Activated CD4-positive, alpha-beta T cell treated with anti-CD3 and anti-CD28 coated beads, Interleukin-2, amount 10 ng/mL, durations not matched to agents 24 days and 14 days (primary cell): ENCODE measurements at regions of chr18 and their contacts with region 1.

Region 1: DNA sequence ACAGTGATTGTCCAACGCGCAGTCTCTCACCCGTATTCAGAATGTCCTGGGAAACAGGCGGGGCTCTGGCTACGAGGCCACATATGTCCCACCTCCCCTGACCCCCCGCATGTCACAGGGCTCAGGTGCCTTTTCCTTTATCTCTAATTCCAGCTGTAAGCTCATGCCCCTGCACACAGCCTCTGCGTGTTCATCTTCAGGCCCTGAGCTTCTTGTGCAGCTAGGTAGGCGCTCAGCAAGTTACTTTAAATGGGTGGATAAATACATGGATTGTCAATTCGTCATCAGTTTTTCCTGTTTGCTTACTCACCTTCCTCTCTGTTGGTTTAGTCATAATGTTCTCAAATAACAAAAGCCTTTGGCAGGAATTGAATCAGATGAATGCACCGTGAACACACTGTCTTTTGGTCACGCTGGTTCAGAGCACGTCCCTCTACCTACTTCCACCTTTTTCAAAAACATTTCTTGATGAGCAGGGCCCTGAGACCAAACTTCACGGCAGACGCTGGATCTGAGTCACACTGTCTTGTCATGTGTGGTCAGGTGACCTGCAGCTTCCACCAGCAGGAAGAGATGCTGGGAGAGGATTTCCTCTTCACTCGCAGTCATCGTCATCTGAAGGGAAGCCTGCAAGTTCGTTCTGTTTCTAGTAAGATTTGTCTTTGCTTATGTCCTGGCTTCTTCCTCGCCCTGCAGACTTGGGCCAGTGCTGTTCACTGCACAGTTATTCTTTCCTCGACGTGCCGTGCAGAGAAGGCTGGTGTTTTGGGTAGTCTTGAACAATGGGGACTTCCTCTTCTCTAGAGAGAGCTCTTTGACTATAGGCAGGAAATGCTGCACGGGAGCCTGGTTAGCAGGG is 138.1 kb downstream of the PTGR3 start:
- DNase-seq: peak; percentile 91
- H3K4me3 Mint-ChIP-seq: peak overlapping the region; percentile 79
- H3K27ac Mint-ChIP-seq: peak overlapping the region; percentile 92
- H3K4me1 Mint-ChIP-seq: peaks cover 29% of the 10 kb centered on the region
- H3K27me3 Mint-ChIP-seq: no peaks in the 10 kb centered on the region

Region 2: DNA sequence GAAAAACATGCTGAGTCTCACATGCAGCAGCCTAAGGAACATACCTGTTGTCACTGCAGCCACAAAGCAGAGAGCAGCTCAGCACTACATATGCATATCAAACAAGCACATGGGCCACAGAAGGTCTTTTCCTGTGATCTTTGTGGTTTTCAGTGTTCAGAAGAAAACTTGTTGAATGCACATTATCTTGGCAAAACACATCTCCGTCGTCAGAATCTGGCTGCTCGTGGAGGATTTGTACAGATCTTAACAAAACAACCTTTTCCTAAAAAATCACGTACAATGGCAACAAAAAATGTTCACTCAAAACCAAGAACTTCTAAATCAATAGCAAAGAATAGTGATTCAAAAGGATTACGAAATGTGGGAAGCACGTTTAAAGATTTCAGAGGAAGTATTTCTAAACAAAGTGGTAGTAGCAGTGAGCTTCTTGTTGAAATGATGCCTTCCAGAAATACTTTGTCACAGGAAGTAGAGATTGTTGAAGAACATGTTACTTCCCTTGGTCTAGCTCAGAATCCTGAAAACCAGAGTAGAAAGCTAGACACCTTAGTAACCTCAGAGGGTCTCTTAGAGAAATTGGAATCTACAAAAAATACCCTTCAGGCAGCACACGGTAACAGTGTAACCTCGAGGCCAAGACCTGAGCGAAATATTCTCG is 439.1 kb before region 1 on chr18:
- intact Hi-C with region 1: loop called (anchors 10 kb)
- DNase-seq: peak; percentile 81
- H3K4me3 Mint-ChIP-seq: peak overlapping the region; percentile 83
- H3K27ac Mint-ChIP-seq: peak overlapping the region; percentile 94
- H3K4me1 Mint-ChIP-seq: peaks cover 38% of the 10 kb centered on the region
- H3K27me3 Mint-ChIP-seq: no peaks in the 10 kb centered on the region

Region 3: DNA sequence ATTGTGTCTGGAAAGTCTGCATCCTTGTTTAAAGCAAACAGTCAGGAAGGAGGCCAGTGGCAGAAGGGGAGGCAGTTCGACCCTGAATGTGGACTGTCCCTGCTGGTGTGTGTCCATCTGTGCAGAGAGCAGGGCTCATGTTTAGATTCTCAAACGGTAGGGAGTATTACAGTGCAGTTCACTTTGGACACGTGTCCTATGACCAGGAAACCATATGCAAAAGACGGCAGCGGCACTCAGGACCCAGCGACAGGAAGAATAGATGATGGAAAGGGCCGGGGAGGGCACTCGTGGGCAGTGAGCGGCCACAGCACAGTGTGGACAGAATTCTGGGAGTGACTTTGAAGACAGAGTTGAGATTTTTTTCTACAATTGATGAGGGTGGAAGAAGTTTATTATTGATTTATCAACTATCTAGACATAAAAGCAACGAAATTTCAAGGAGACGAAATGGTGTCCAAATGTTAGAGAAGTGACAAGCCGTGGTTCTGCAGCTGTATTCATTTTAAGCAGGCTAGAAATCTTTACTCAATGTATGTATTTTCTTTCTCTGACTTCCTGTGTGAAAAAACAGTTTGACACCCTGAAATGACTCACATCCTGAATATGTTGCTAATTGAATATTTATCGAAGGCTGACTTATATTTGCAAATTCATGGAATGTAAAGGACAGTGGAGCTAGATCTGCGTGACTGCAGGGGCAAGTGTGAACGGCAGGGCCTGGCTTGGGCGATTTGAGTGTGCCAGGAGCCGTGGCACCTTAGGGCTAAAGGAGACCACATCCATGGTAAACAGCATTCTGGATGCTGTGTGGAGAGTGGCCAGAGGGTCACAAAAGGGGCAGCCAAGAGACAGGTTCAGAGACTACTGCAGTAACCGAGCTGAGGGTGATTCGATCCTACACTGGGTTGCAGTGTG is 76.1 kb before region 1 on chr18:
- intact Hi-C with region 1: loop called (anchors 2 kb)
- DNase-seq: peak; percentile 67
- H3K4me3 Mint-ChIP-seq: peak overlapping the region; percentile 72
- H3K27ac Mint-ChIP-seq: peak overlapping the region; percentile 76
- H3K4me1 Mint-ChIP-seq: peaks cover 44% of the 10 kb centered on the region
- H3K27me3 Mint-ChIP-seq: no peaks in the 10 kb centered on the region

Region 4: DNA sequence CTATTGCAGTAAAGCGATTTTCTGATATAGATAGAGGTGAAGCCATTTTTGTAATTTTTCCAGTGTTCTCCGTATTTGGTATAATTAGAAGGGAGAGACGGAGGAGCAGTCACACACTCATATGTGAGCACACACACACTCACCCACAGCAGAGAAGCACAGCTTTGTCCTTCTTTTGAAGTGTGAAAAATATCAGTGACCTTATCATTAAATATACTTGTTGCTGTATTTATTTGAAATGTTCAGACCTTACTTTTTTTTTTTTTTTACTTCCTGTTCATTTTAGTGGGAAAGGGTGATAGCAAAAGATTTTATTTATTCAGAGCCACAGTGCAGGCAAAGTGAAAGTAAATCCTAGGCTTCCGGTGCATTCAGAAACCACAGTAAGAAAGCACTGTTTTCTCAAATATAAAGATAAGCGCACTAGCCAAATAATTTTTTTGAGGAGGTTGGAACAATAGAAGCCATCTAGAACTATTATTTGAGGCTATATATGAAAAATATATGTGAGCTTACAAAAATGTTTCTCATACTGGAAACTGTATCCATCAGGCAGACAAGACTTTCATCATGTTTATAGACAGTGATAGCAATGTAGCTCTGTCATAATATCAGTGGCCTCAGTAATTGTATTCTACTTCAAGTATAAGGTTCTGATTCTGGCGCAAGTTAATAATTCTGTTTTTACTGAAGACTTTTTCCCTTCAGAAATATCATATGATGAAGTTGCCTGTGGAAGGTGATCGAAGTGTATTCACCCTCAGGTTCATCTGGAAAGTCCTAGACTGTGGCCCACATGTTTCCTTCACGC is 177.0 kb after region 1 on chr18:
- intact Hi-C with region 1: loop called (anchors 10 kb)
- DNase-seq: peak; percentile 75
- H3K4me3 Mint-ChIP-seq: peak overlapping the region; percentile 90
- H3K27ac Mint-ChIP-seq: peak overlapping the region; percentile 79
- H3K4me1 Mint-ChIP-seq: peaks cover 32% of the 10 kb centered on the region
- H3K27me3 Mint-ChIP-seq: no peaks in the 10 kb centered on the region